ENCODE measurements at regions of chr1 and their contacts with region 1.

Region 1: DNA sequence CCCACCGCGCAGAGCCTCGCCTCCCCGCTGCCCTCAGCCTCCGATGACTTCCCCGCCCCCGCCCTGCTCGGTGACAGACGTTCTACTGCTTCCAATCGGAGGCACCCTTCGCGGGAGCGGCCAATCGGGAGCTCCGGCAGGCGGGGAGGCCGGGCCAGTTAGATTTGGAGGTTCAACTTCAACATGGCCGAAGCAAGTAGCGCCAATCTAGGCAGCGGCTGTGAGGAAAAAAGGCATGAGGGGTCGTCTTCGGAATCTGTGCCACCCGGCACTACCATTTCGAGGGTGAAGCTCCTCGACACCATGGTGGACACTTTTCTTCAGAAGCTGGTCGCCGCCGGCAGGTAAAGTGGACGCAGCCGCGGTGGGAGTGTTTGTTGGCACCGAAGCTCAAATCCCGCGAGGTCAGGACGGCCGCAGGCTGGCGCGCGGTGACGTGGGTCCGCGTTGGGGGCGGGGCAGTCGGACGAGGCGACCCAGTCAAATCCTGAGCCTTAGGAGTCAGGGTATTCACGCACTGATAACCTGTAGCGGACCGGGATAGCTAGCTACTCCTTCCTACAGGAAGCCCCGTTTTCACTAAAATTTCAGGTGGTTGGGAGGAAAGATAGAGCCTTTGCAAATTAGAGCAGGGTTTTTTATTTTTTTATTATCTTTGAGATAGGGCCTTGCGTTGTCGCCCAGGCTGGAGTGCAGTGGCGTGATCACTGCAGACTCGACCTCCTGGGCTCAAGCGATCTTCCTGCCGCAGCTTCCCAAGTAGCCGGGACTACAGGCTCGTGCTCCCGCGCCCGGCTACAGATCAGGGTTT is at the start of gene PMF1:
- DNase-seq: peak; percentile 97
- ATAC-seq: peak; percentile 96
- H3K4me3 ChIP-seq: peak within 1 kb of the TSS; percentile 84
- H3K27ac ChIP-seq: peak within 1 kb of the TSS; percentile 85
- H3K4me1 ChIP-seq: peaks cover 23% of the 10 kb centered on the region
- H3K27me3 ChIP-seq: no peaks in the 10 kb centered on the region
- CTCF ChIP-seq: no peak
- total RNA-seq, gene PMF1: 131 and 163 TPM in 2 replicates

Region 2: DNA sequence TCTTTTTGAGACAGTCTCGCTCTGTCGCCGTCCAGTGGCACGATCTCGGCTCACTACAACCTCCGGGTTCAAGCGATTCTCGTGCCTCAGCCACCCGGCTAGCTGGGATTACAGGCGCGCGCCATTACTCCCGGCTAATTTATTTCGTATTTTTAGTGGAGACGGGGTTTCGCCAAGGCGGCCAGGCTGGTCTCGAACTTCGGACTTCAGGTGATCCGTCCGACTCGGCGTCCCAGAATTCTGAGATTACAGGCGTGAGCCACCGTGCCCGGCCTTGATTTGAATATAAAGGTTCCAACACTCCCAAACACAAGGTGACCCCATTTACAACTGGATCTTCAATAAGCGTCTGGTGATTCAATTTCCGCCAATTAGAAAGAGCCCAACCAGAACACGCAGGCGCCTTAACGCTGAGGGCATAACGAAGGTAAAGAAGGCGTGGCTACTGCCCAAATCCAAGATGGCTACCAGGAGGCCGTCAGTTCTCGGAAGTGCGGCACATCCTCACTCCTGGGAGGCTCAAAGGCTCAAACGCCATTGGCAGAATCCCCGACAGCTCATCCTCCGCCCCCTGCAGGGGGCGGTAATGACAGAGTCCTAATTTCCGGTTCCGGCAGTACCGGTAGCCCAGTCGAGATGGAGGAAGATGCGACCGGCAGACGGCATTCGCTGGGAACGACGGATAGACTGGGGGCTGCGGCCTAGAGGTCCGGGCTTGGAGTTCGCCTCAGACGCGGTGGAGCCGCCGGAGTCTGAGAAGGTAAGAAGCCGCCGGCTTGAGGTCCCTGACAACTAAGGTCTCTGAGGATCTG is 19.3 kb before region 1 on chr1 and contains the start of gene SLC25A44:
- CTCF ChIA-PET with region 1: no interaction called
- POLR2A ChIA-PET with region 1: interaction called, 13 read pairs
- intact Hi-C with region 1: no loop called
- DNase-seq: peak; percentile 100
- ATAC-seq: peak; percentile 98
- H3K4me3 ChIP-seq: peak within 1 kb of the TSS; percentile 87
- H3K27ac ChIP-seq: peak within 1 kb of the TSS; percentile 67
- H3K4me1 ChIP-seq: peaks cover 6% of the 10 kb centered on the region
- H3K27me3 ChIP-seq: no peaks in the 10 kb centered on the region
- CTCF ChIP-seq: peak; percentile 43
- total RNA-seq, gene SLC25A44: 28.1 and 33.1 TPM in 2 replicates

Measured in PC-3 (cell line).